CD4-positive, alpha-beta memory T cell (primary cell): ENCODE measurements at regions of chr3 and their contacts with region 1.

Region 1: GRCh38 chr3:69092030-69092516 is 7.3 kb downstream of the ARL6IP5 start:
- DNase-seq: peak; percentile 50 to 60 (median 57)
- H3K4me3 ChIP-seq: peak overlapping the region; percentile 2 to 36
- H3K4me3 Mint-ChIP-seq: peak overlapping the region; percentile 64 to 98 (median 86)
- H3K27ac ChIP-seq: peak overlapping the region; percentile 65
- H3K27ac Mint-ChIP-seq: peak overlapping the region; percentile 85 to 97 (median 94)
- H3K4me1 ChIP-seq: peaks cover 98% of the 10 kb centered on the region
- H3K4me1 Mint-ChIP-seq: peaks cover 66 to 92% (median 80%) of the 10 kb centered on the region in 4 donors
- H3K27me3 ChIP-seq: no peaks in the 10 kb centered on the region
- H3K27me3 Mint-ChIP-seq: no peaks in the 10 kb centered on the region

Region 2: GRCh38 chr3:69058180-69058946 is 33.7 kb before region 1 on chr3:
- CTCF ChIA-PET with region 1: interaction called, 5 read pairs
- POLR2A ChIA-PET with region 1: interaction called, 287 read pairs
- intact Hi-C with region 1: no loop called
- DNase-seq: peak in 4 of 5 donors; percentile 33 to 55 (median 45)
- H3K4me3 ChIP-seq: no peak overlapping the region
- H3K4me3 Mint-ChIP-seq: peak overlapping the region in 7 of 8 donors; percentile 27 to 75 (median 65)
- H3K27ac ChIP-seq: peak overlapping the region; percentile 17
- H3K27ac Mint-ChIP-seq: peak overlapping the region; percentile 83 to 96 (median 89)
- H3K4me1 ChIP-seq: peaks cover 32% of the 10 kb centered on the region
- H3K4me1 Mint-ChIP-seq: peaks cover 19 to 48% (median 28%) of the 10 kb centered on the region in 4 donors
- H3K27me3 ChIP-seq: no peaks in the 10 kb centered on the region
- H3K27me3 Mint-ChIP-seq: no peaks in the 10 kb centered on the region

Region 3: GRCh38 chr3:69065318-69065964 is 26.6 kb before region 1 on chr3:
- CTCF ChIA-PET with region 1: interaction called, 5 read pairs
- POLR2A ChIA-PET with region 1: interaction called, 208 read pairs
- intact Hi-C with region 1: no loop called
- DNase-seq: peak in 4 of 5 donors; percentile 48 to 56 (median 52)
- H3K4me3 ChIP-seq: no peak overlapping the region
- H3K4me3 Mint-ChIP-seq: peak overlapping the region in 7 of 8 donors; percentile 6 to 83 (median 75)
- H3K27ac ChIP-seq: peak overlapping the region; percentile 27
- H3K27ac Mint-ChIP-seq: peak overlapping the region; percentile 41 to 94 (median 86)
- H3K4me1 ChIP-seq: peaks cover 43% of the 10 kb centered on the region
- H3K4me1 Mint-ChIP-seq: peaks cover 26 to 53% (median 36%) of the 10 kb centered on the region in 4 donors
- H3K27me3 ChIP-seq: no peaks in the 10 kb centered on the region
- H3K27me3 Mint-ChIP-seq: no peaks in the 10 kb centered on the region

Region 4: DNA sequence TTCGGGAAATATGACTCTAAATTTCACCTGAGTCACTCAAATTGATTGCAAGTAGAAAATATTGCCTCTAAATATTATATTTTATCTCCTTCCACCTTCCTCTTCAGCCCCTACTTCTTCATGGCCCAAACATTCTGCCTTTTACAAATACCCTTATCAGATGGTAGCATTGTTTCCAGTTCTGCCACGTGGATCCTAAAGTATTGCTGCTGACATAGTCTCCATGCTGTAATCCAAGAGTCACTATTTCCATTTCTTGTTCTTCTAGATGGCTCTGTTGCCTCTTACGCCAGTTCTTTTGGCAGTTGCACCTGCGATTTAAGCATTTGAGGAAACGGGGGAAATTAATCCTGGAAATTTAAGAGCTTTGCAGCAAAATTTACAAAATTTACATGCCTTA is 16.7 kb after region 1 on chr3:
- CTCF ChIA-PET with region 1: interaction called, 7 read pairs
- POLR2A ChIA-PET with region 1: interaction called, 9 read pairs
- intact Hi-C with region 1: loop called (anchors 1 kb)
- DNase-seq: no peak
- H3K4me3 ChIP-seq: no peak overlapping the region
- H3K4me3 Mint-ChIP-seq: no peak overlapping the region
- H3K27ac ChIP-seq: no peak overlapping the region
- H3K27ac Mint-ChIP-seq: peak overlapping the region in 5 of 7 donors; percentile 10 to 63 (median 43)
- H3K4me1 ChIP-seq: peaks cover 15% of the 10 kb centered on the region
- H3K4me1 Mint-ChIP-seq: peaks cover 14 to 26% (median 20%) of the 10 kb centered on the region in 4 donors
- H3K27me3 ChIP-seq: no peaks in the 10 kb centered on the region
- H3K27me3 Mint-ChIP-seq: no peaks in the 10 kb centered on the region

Region 5: GRCh38 chr3:69120879-69121464 is 28.9 kb after region 1 on chr3:
- CTCF ChIA-PET with region 1: interaction called, 27 read pairs
- POLR2A ChIA-PET with region 1: interaction called, 5 read pairs
- intact Hi-C with region 1: no loop called
- DNase-seq: peak; percentile 75 to 80 (median 79)
- H3K4me3 ChIP-seq: no peak overlapping the region
- H3K4me3 Mint-ChIP-seq: no peak overlapping the region
- H3K27ac ChIP-seq: no peak overlapping the region
- H3K27ac Mint-ChIP-seq: no peak overlapping the region
- H3K4me1 ChIP-seq: no peaks in the 10 kb centered on the region
- H3K4me1 Mint-ChIP-seq: peaks cover 5% of the 10 kb centered on the region in 4 donors
- H3K27me3 ChIP-seq: no peaks in the 10 kb centered on the region
- H3K27me3 Mint-ChIP-seq: peaks cover 0 to 1% of the 10 kb centered on the region in 2 donors